Activated T-helper 1 cell treated with anti-CD3 and anti-CD28 coated beads, Interleukin-12 subunit alpha, Interleukin-12 subunit beta, Interleukin-2, Interleukin-4 antibody, amounts not matched to agents 30 ng/mL and 10 ng/mL and 1 ng/mL, durations not matched to agents 14 hours and 24 hours and 36 hours (primary cell): ENCODE measurements at regions of chr2 and their contacts with region 1.

Region 1: GRCh38 chr2:105873721-105874120 is 129.0 kb downstream of the NCK2 start:
- DNase-seq: peak; percentile 44
- H3K4me3 Mint-ChIP-seq: peak overlapping the region; percentile 61
- H3K27ac Mint-ChIP-seq: peak overlapping the region; percentile 89
- H3K4me1 Mint-ChIP-seq: peaks cover 87% of the 10 kb centered on the region
- H3K27me3 Mint-ChIP-seq: no peaks in the 10 kb centered on the region

Region 2: DNA sequence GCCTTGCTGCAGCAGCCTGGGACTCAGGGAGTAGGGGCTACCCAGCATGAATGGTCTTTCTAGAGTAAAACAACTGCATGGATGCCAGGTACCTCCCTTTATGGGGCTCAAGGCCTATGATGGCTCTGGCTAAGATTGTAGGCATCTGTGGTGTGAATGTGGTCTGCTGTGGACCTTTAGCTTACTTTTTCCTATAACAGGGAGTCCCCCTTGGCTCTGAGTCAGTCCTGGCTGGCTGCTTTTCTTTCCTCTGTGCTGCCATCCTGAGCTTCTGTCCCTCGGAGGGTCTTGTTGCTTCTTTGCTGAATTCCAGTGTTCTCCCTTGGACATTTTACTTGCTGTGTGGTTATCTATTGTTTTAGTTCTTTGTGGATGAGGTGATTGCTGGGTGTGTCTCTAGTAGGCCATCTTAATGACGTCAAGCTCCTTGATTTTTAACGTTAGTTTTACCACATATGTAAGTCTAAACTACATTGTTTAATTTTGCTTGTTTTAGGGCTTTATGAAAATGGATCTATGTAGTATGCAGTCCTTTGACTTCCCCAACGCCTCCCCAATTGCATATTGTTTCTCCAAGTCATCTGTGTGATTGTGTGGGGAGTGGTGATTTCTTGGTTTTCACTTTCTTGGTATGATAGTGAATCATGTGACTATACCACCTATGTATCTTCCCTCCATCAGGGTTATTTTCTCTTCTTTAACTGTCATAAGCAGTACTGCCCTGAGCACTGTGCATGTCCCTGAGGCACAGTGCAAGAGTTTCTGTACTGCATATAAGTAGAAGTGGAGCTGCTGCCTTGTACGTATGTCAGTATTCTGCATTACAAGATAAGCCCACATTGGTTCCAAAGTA is 36.7 kb before region 1 on chr2:
- intact Hi-C with region 1: loop called (anchors 1 kb)
- DNase-seq: no peak
- H3K4me3 Mint-ChIP-seq: peak overlapping the region; percentile 44
- H3K27ac Mint-ChIP-seq: peak overlapping the region; percentile 61
- H3K4me1 Mint-ChIP-seq: peaks cover 89% of the 10 kb centered on the region
- H3K27me3 Mint-ChIP-seq: no peaks in the 10 kb centered on the region

Region 3: DNA sequence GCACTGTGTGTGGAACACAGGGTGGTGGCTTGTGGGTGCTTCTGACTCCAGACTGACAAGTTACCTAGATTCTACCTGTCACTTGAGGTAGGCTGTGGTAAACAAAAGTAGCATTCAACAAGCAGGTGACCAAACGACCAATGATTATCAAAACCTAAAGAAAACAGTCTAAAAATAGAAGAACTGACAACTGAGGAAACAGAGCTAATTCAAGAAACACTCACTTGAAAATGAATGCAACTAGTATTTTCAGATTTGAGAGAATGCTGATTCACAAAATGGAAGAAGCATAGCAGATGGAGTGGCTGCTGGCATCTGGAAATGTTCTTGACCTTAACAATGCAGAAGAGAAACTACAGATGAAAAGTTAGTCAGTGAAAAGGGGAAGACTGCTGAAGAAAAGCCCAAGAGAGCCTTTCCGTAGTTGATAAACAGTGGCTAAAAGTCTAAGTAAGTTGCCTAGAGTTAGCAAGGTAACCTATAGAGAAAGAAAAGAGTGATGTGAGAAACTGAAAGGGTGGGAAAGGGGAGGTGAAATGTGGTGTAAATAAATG is 41.4 kb after region 1 on chr2:
- intact Hi-C with region 1: loop called (anchors 5 kb)
- DNase-seq: no peak
- H3K4me3 Mint-ChIP-seq: no peak overlapping the region
- H3K27ac Mint-ChIP-seq: no peak overlapping the region
- H3K4me1 Mint-ChIP-seq: peaks cover 39% of the 10 kb centered on the region
- H3K27me3 Mint-ChIP-seq: no peaks in the 10 kb centered on the region

Region 4: GRCh38 chr2:105926960-105927678 is 53.4 kb after region 1 on chr2:
- intact Hi-C with region 1: loop called (anchors 1 kb)
- DNase-seq: peak; percentile 49
- H3K4me3 Mint-ChIP-seq: peak overlapping the region; percentile 23
- H3K27ac Mint-ChIP-seq: peak overlapping the region; percentile 85
- H3K4me1 Mint-ChIP-seq: peaks cover 44% of the 10 kb centered on the region
- H3K27me3 Mint-ChIP-seq: no peaks in the 10 kb centered on the region